HEK293 (cell line): ENCODE measurements at regions of chr15 and their contacts with region 1.

Region 1: GRCh38 chr15:65304389-65305144 is at the start of gene RNU5B-1:
- H3K4me3 ChIP-seq: peak within 1 kb of the TSS; percentile 41
- H3K27ac ChIP-seq: peak within 1 kb of the TSS; percentile 83
- H3K4me1 ChIP-seq: peaks cover 8% of the 10 kb centered on the region; the same call in 1 of the 2 replicates
- CTCF ChIP-seq: peak; percentile 89; the same call in 1 of the 2 replicates

Region 2: DNA sequence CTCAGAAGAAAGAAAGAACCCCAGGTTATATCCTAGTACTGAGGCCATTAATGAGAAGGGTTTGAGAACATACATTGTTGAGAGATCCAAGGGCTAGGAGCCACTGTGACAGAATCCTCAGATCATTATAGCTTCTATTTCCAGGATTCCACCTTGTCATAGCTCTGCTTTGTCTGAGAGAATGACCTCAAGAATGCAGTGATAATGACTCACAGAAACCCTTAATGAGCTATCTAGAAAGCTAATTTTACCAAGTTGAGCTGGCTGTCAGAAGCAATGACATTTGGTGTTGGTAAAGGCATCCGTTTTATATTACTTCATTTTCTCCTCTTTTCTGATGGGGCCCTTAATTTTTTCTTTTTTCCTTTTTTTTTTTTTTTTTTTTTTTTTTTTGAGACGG is 906.0 kb before region 1 on chr15:
- CTCF ChIA-PET with region 1: no interaction called
- POLR2A ChIA-PET with region 1: no interaction called
- H3K4me3 ChIP-seq: no peak overlapping the region
- H3K27ac ChIP-seq: no peak overlapping the region
- H3K4me1 ChIP-seq: no peaks in the 10 kb centered on the region
- CTCF ChIP-seq: no peak

Region 3: GRCh38 chr15:65184868-65185738 is 119.5 kb before region 1 on chr15 and contains the start of gene CLPX:
- CTCF ChIA-PET with region 1: interaction called, 3 read pairs
- POLR2A ChIA-PET with region 1: interaction called, 27 read pairs
- H3K4me3 ChIP-seq: peak within 1 kb of the TSS; percentile 91
- H3K27ac ChIP-seq: peak within 1 kb of the TSS; percentile 78
- H3K4me1 ChIP-seq: no peaks in the 10 kb centered on the region
- CTCF ChIP-seq: no peak

Region 4: DNA sequence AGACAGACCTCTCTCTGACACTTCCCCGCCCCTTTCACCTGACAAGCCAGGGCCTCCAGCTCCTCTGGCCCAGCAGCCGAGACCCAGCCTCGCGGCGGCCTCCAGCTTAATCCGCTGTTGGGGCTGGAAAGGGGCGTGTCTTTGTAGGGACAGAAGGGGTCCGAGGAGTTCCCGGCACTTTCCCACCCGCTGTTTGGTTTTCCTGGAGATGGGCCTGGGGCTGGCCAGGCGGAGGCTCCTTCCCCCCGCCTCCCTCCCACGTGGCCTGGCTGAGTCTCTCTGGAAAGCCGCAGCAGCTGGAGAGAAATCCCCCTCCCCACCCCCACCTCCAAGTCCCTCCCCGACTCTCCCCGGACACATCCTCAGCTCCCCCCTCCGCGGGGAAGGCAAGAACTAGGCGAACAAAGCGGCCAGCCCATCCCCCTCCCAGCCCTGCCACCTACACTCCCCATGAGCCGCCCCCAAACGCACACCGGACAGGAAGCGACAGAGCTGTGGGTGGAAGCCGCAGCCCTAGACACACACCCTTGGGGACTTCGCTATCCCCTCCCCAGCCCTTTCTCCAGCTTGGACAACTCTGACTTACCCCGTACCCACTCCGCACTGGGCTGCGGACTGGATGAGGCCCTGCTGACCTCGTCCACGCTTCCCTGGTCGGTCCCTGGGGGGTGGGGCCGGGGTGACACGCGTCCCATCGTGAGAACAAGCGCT is 116.9 kb after region 1 on chr15:
- CTCF ChIA-PET with region 1: no interaction called
- POLR2A ChIA-PET with region 1: interaction called, 13 read pairs
- H3K4me3 ChIP-seq: peak overlapping the region; percentile 59
- H3K27ac ChIP-seq: peak overlapping the region; percentile 86
- H3K4me1 ChIP-seq: peaks cover 18% of the 10 kb centered on the region
- CTCF ChIP-seq: no peak